ENCODE measurements at regions of chr7 and their contacts with region 1.

Region 1: GRCh38 chr7:22110227-22110839 is 164.6 kb upstream of the CDCA7L start:
- DNase-seq: peak; percentile 61 to 68 (median 63)
- H3K4me3 ChIP-seq: no peak overlapping the region
- H3K4me3 Mint-ChIP-seq: no peak overlapping the region
- H3K27ac ChIP-seq: no peak overlapping the region
- H3K27ac Mint-ChIP-seq: peak overlapping the region in 1 of 7 donors; percentile 63
- H3K4me1 ChIP-seq: no peaks in the 10 kb centered on the region
- H3K4me1 Mint-ChIP-seq: no peaks in the 10 kb centered on the region
- H3K27me3 ChIP-seq: no peaks in the 10 kb centered on the region
- H3K27me3 Mint-ChIP-seq: peaks cover 0 to 4% of the 10 kb centered on the region in 2 donors

Region 2: GRCh38 chr7:22094413-22095342 is 15.7 kb before region 1 on chr7:
- CTCF ChIA-PET with region 1: interaction called, 32 read pairs
- POLR2A ChIA-PET with region 1: no interaction called
- intact Hi-C with region 1: no loop called
- DNase-seq: no peak
- H3K4me3 ChIP-seq: no peak overlapping the region
- H3K4me3 Mint-ChIP-seq: peak overlapping the region in 1 of 8 donors; percentile 13
- H3K27ac ChIP-seq: no peak overlapping the region
- H3K27ac Mint-ChIP-seq: no peak overlapping the region
- H3K4me1 ChIP-seq: no peaks in the 10 kb centered on the region
- H3K4me1 Mint-ChIP-seq: no peaks in the 10 kb centered on the region
- H3K27me3 ChIP-seq: no peaks in the 10 kb centered on the region
- H3K27me3 Mint-ChIP-seq: peaks cover 5 to 8% of the 10 kb centered on the region in 2 donors

Region 3: DNA sequence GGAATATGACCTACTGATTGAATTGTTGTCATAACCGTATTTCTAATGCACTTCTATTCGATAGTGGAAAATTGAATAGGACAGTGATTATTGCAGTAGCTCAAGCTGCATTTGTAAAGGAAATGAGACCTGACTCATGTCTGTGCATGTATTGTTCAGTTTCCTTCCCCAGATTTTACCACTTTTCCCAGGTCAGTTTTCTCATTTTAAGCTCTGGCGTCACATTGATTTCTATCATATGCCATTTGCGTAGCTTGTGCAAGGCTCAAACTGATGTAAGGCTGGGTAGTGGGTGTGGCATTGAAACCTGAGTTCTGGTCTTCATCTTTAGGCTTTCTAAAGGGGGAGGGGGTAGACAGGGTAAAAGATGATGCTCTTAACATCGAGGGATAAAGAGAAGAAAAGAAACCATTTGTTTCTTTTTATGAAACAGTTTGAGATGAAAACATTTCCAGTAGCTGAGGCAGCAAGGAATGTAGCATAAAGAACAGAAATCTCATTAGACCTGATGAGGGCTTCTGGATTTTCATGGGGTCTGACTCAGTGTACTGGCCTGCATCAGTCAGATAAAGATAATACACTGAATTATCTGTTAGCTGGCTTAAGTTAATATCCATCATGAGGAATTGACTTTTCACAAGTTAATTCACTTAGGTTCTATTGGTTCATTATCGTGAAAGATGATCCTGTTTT is 17.6 kb after region 1 on chr7:
- CTCF ChIA-PET with region 1: interaction called, 22 read pairs
- POLR2A ChIA-PET with region 1: no interaction called
- intact Hi-C with region 1: no loop called
- DNase-seq: no peak
- H3K4me3 ChIP-seq: no peak overlapping the region
- H3K4me3 Mint-ChIP-seq: no peak overlapping the region
- H3K27ac ChIP-seq: no peak overlapping the region
- H3K27ac Mint-ChIP-seq: no peak overlapping the region
- H3K4me1 ChIP-seq: no peaks in the 10 kb centered on the region
- H3K4me1 Mint-ChIP-seq: peaks cover 0 to 2% (median 0%) of the 10 kb centered on the region in 4 donors
- H3K27me3 ChIP-seq: no peaks in the 10 kb centered on the region
- H3K27me3 Mint-ChIP-seq: peaks cover 10 to 19% of the 10 kb centered on the region in 2 donors

Region 4: GRCh38 chr7:22393913-22394729 is 283.8 kb after region 1 on chr7:
- CTCF ChIA-PET with region 1: no interaction called
- POLR2A ChIA-PET with region 1: no interaction called
- intact Hi-C with region 1: no loop called
- DNase-seq: no peak
- H3K4me3 ChIP-seq: no peak overlapping the region
- H3K4me3 Mint-ChIP-seq: peak overlapping the region in 1 of 8 donors; percentile 7
- H3K27ac ChIP-seq: no peak overlapping the region
- H3K27ac Mint-ChIP-seq: no peak overlapping the region
- H3K4me1 ChIP-seq: no peaks in the 10 kb centered on the region
- H3K4me1 Mint-ChIP-seq: peaks cover 0 to 2% (median 0%) of the 10 kb centered on the region in 4 donors
- H3K27me3 ChIP-seq: no peaks in the 10 kb centered on the region
- H3K27me3 Mint-ChIP-seq: no peaks in the 10 kb centered on the region

Region 5: GRCh38 chr7:22481726-22482125 is 371.4 kb after region 1 on chr7:
- CTCF ChIA-PET with region 1: interaction called, 35 read pairs
- POLR2A ChIA-PET with region 1: no interaction called
- intact Hi-C with region 1: no loop called
- DNase-seq: no peak
- H3K4me3 ChIP-seq: no peak overlapping the region
- H3K4me3 Mint-ChIP-seq: peak overlapping the region in 2 of 8 donors; percentile 7 to 18
- H3K27ac ChIP-seq: no peak overlapping the region
- H3K27ac Mint-ChIP-seq: peak overlapping the region in 1 of 7 donors; percentile 68
- H3K4me1 ChIP-seq: peaks cover 9% of the 10 kb centered on the region
- H3K4me1 Mint-ChIP-seq: peaks cover 0 to 3% (median 0%) of the 10 kb centered on the region in 4 donors
- H3K27me3 ChIP-seq: no peaks in the 10 kb centered on the region
- H3K27me3 Mint-ChIP-seq: peaks cover 0 to 1% of the 10 kb centered on the region in 2 donors

Region 6: DNA sequence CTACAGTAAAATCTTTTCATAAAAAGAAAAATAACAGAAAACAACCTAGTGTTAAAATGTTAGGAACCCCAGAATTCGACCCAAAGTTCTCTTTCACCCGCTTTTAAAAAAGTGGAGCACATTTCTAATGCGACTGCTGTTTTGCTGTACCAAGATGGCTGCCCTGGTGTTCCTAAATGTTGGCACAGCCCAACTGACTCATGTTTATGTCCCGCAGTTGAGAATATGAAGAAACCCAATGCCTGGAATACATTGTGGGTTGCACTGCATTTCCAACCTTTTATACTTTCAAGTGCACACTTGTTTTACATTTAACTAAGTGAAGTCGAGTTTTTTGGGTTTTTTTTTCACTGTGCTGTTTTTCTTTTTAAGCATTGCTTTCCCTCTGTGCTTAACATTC is 388.7 kb after region 1 on chr7:
- CTCF ChIA-PET with region 1: interaction called, 26 read pairs
- POLR2A ChIA-PET with region 1: no interaction called
- intact Hi-C with region 1: loop called (anchors 1 kb)
- DNase-seq: no peak
- H3K4me3 ChIP-seq: no peak overlapping the region
- H3K4me3 Mint-ChIP-seq: no peak overlapping the region
- H3K27ac ChIP-seq: no peak overlapping the region
- H3K27ac Mint-ChIP-seq: no peak overlapping the region
- H3K4me1 ChIP-seq: no peaks in the 10 kb centered on the region
- H3K4me1 Mint-ChIP-seq: peaks cover 2 to 9% (median 7%) of the 10 kb centered on the region in 4 donors
- H3K27me3 ChIP-seq: no peaks in the 10 kb centered on the region
- H3K27me3 Mint-ChIP-seq: peaks cover 6 to 18% of the 10 kb centered on the region in 2 donors